HepG2 (cell line): ENCODE measurements at regions of chr22 and their contacts with region 1.

Region 1: GRCh38 chr22:46542011-46542985 is 4.9 kb upstream of the CELSR1 start:
- DNase-seq: peak; percentile 45
- ATAC-seq: peak; percentile 98
- H3K4me3 ChIP-seq: no peak overlapping the region; a peak in 1 of 6 replicates
- H3K27ac ChIP-seq: no peak overlapping the region
- H3K4me1 ChIP-seq: peaks cover 44% of the 10 kb centered on the region
- H3K27me3 ChIP-seq: peaks cover 4 to 24% of the 10 kb centered on the region in 2 experiments
- CTCF ChIP-seq: peak; percentile 99
- EP300 ChIP-seq: 0 out of 4 replicates have a peak, but pooled peaks of 1 of the 2 experiments have one; percentile 36
- POLR2A ChIP-seq: no peak
- RAD21 ChIP-seq: peak; percentile 96

Region 2: GRCh38 chr22:46150034-46150654 is 392.2 kb before region 1 on chr22 and contains the start of gene PPARA:
- CTCF ChIA-PET with region 1: no interaction called
- POLR2A ChIA-PET with region 1: no interaction called
- in situ Hi-C with region 1: loop called (anchors 25 kb)
- intact Hi-C with region 1: no loop called
- DNase-seq: peak; percentile 46
- ATAC-seq: peak; percentile 45
- H3K4me3 ChIP-seq: peak within 1 kb of the TSS; percentile 89 to 96 (median 95)
- H3K27ac ChIP-seq: peak within 1 kb of the TSS; percentile 77
- H3K4me1 ChIP-seq: peaks cover 49% of the 10 kb centered on the region
- H3K27me3 ChIP-seq: no peaks in the 10 kb centered on the region
- CTCF ChIP-seq: no peak
- EP300 ChIP-seq: no peak
- POLR2A ChIP-seq: no peak
- RAD21 ChIP-seq: 0 out of 2 replicates have a peak, but pooled peaks have one; percentile 19
- total RNA-seq, gene PPARA: 24.7 and 32.0 TPM in 2 replicates

Region 3: GRCh38 chr22:46399251-46399999 is 142.9 kb before region 1 on chr22:
- CTCF ChIA-PET with region 1: no interaction called
- POLR2A ChIA-PET with region 1: no interaction called
- in situ Hi-C with region 1: no loop called
- intact Hi-C with region 1: loop called (anchors 1 kb)
- DNase-seq: no peak
- ATAC-seq: no peak
- H3K4me3 ChIP-seq: no peak overlapping the region
- H3K27ac ChIP-seq: no peak overlapping the region
- H3K4me1 ChIP-seq: no peaks in the 10 kb centered on the region
- H3K27me3 ChIP-seq: no peaks in the 10 kb centered on the region; a peak in 1 of 5 replicates
- CTCF ChIP-seq: peak; percentile 61
- EP300 ChIP-seq: no peak
- POLR2A ChIP-seq: no peak
- RAD21 ChIP-seq: no peak

Region 4: DNA sequence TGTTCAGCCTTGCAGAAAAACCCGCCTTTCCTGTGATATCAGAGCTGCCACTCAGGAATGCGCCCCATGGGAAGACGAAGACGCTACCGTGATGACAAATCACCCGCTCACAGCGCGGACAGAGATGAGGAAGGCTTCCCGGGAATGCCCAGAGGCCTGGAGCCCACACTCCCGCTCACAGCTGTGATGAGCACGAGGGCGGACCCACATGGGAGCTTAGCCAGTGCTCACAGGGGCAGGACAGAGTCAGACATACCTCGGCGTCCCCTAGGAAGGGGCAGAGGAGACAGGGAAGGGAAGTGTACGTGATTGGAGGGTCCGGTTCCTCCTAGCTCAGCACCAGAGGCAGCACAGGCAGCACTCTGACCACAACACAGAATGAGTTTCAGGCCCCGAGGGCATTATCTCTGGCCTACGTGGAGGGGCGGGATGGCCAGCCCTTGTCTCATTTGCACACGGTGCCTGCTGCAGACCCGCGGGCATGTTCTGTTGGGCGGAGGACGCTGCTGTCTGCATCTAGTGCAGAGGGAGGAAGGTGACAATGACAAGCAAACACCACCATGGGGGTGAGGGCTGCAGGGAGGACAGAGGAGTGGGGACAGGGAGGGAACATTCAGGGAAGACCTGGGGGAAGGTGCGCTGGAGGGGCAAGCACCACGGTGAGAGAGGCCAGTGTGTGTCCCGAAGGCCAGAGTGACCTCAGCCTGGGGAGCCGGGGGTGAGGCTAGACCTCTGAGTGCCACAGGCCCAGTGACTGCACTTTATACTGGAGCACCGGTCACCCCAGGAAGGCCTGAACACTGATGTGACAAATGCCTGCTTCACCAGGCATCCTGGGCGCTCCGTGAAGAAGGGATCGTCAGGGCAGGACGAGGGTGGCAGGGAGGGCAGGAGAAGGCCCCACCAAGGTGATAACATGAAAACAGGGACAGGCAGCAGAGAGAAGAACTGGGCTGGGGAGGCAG is 84.5 kb before region 1 on chr22:
- CTCF ChIA-PET with region 1: no interaction called
- POLR2A ChIA-PET with region 1: no interaction called
- in situ Hi-C with region 1: no loop called
- intact Hi-C with region 1: loop called (anchors 10 kb)
- DNase-seq: no peak
- ATAC-seq: no peak
- H3K4me3 ChIP-seq: no peak overlapping the region
- H3K27ac ChIP-seq: no peak overlapping the region
- H3K4me1 ChIP-seq: peaks cover 75% of the 10 kb centered on the region
- H3K27me3 ChIP-seq: no peaks in the 10 kb centered on the region
- CTCF ChIP-seq: no peak
- EP300 ChIP-seq: no peak
- POLR2A ChIP-seq: no peak
- RAD21 ChIP-seq: no peak